ENCODE measurements at regions of chr14 and their contacts with region 1.

Region 1: GRCh38 chr14:63993992-63994391 is 141.2 kb downstream of the SYNE2 start:
- DNase-seq: peak in 3 of 9 experiments; percentile 6 to 34 (median 19)
- ATAC-seq: no peak
- H3K4me3 ChIP-seq: no peak overlapping the region
- H3K4me3 Mint-ChIP-seq: no peak overlapping the region
- H3K27ac ChIP-seq: no peak overlapping the region
- H3K27ac Mint-ChIP-seq: no peak overlapping the region
- H3K4me1 ChIP-seq: no peaks in the 10 kb centered on the region
- H3K4me1 Mint-ChIP-seq: peaks cover 3% of the 10 kb centered on the region
- H3K27me3 ChIP-seq: no peaks in the 10 kb centered on the region
- H3K27me3 Mint-ChIP-seq: no peaks in the 10 kb centered on the region
- CTCF ChIP-seq: no peak

Region 2: GRCh38 chr14:63795532-63795931 is 198.5 kb before region 1 on chr14:
- CTCF ChIA-PET with region 1: interaction called, 7 read pairs
- POLR2A ChIA-PET with region 1: no interaction called
- intact Hi-C with region 1: loop called in 1 of 2 experiments (anchors 5 kb)
- DNase-seq: no peak
- ATAC-seq: no peak
- H3K4me3 ChIP-seq: no peak overlapping the region
- H3K4me3 Mint-ChIP-seq: no peak overlapping the region
- H3K27ac ChIP-seq: no peak overlapping the region
- H3K27ac Mint-ChIP-seq: no peak overlapping the region
- H3K4me1 ChIP-seq: no peaks in the 10 kb centered on the region
- H3K4me1 Mint-ChIP-seq: peaks cover 2% of the 10 kb centered on the region
- H3K27me3 ChIP-seq: no peaks in the 10 kb centered on the region
- H3K27me3 Mint-ChIP-seq: no peaks in the 10 kb centered on the region
- CTCF ChIP-seq: no peak

Measured in CD8-positive, alpha-beta T cell (primary cell).